Cardiac septum (tissue), 1 donor: ENCODE measurements at regions of chr6 and their contacts with region 1.

Region 1: GRCh38 chr6:15962449-15962764 is 166.5 kb upstream of the MYLIP start:
- DNase-seq: no peak

Region 2: GRCh38 chr6:15897063-15897886 is 65.1 kb before region 1 on chr6:
- intact Hi-C with region 1: loop called (anchors 5 kb)
- DNase-seq: no peak

Region 3: GRCh38 chr6:15994814-15995459 is 32.5 kb after region 1 on chr6:
- intact Hi-C with region 1: loop called (anchors 1 kb)
- DNase-seq: no peak